Activated CD4-positive, alpha-beta memory T cell treated with anti-CD3 and anti-CD28 coated beads, Interleukin-2, amount 10 ng/mL, durations not matched to agents 7 days and 5 days (primary cell): ENCODE measurements at regions of chr19 and their contacts with region 1.

Region 1: DNA sequence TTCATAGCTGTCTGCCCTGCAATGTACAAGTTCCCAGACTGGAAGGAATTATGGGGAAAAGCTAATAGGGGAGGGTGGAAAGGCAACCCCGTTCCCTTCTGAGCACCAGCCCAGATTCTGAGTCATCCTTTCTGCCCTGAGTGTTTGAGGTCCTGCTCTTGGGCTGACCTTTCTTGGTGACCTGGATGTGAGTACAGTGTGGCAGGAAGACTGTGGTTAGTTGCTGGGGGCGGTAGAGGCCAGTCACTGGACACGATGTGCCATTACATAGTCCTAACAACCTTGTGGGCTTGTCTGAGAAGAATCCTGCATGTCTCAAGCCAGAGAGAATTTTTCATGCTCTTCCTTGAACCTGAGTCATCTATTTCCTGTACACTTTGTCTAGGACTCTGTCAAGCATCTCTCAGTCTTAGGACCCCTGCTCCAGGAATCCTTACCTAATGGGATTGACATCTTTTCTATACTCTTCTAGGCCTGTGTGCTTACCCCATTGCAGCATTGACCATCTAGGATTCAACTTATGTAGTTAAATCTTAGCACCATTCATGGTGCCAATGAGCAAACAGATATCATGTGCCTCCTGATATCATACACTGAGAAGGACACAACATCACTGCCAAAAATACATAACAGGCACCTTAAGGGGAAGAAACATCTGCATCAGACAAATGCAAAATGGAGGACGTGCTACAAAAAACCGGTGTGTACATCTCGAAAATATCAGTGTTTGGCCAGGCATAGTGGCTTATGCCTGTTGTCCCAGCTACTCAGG is 8.1 kb upstream of the ANGPTL4 start:
- DNase-seq: no peak
- H3K4me3 Mint-ChIP-seq: no peak overlapping the region
- H3K27ac Mint-ChIP-seq: no peak overlapping the region
- H3K4me1 Mint-ChIP-seq: peaks cover 13% of the 10 kb centered on the region
- H3K27me3 Mint-ChIP-seq: peaks cover 14% of the 10 kb centered on the region

Region 2: DNA sequence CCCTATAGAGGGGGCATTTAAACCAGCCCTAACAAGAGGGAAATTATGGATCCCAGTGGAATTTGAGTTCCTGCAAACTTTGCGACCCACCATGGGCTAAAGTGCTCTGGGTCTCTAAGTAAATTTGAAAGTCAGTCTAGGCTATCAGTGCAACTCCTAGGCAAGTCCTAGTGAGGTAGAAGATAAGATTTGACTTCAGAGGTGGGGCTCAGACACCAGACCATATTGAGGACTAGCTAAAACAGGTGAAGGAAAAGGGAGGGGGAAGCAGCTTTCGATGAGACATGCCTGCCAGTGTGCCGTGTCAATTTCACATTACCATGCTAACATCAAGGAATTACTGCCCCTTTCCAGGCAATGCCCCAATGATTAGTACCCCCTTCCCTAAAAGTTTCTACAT is 86.1 kb before region 1 on chr19:
- CTCF ChIA-PET with region 1: interaction called, 14 read pairs
- POLR2A ChIA-PET with region 1: interaction called, 3 read pairs
- DNase-seq: no peak
- H3K4me3 Mint-ChIP-seq: peak overlapping the region; percentile 87
- H3K27ac Mint-ChIP-seq: peak overlapping the region; percentile 81
- H3K4me1 Mint-ChIP-seq: peaks cover 19% of the 10 kb centered on the region
- H3K27me3 Mint-ChIP-seq: no peaks in the 10 kb centered on the region

Region 3: GRCh38 chr19:8342684-8343482 is 12.9 kb before region 1 on chr19 and contains the start of gene KANK3:
- CTCF ChIA-PET with region 1: interaction called, 28 read pairs
- POLR2A ChIA-PET with region 1: interaction called, 12 read pairs
- DNase-seq: peak; percentile 95
- H3K4me3 Mint-ChIP-seq: peak within 1 kb of the TSS; percentile 82
- H3K27ac Mint-ChIP-seq: peak within 1 kb of the TSS; percentile 64
- H3K4me1 Mint-ChIP-seq: peaks cover 21% of the 10 kb centered on the region
- H3K27me3 Mint-ChIP-seq: peaks cover 16% of the 10 kb centered on the region
- total RNA-seq, gene KANK3: 7.4 to 8.7 TPM

Region 4: DNA sequence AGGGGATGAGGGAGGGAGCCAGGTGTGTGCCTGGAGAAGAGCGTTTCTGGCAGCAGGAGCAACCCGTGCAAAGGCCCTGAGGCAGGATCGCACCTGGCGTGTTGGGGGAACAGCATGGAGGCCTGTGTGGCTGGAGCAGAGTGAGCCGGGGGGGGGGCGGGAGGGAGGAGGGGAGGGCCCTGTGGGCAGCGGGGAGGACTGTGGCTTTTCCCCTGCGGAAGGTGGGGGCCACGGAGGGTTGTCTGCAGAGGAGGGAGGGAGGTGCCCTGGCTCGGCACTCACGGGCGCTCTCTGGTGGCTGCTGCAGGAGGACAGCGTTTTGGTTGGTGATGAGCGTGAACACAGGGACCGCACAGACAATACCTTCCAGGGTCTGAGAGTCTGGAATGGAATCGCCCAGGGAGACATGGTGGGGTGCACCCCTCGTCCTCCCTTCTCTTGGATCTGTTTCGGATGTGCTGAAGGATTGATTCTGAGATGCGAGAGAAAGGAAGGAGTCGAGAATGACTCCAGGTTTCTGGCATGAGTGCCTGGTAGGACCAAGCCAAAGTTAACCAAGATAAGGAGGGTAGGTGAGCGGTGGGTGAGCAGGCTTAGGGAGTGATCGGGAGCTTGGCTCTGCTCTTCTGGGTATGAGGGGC is 40.9 kb after region 1 on chr19:
- CTCF ChIA-PET with region 1: interaction called, 16 read pairs
- POLR2A ChIA-PET with region 1: interaction called, 4 read pairs
- DNase-seq: peak; percentile 86
- H3K4me3 Mint-ChIP-seq: no peak overlapping the region
- H3K27ac Mint-ChIP-seq: no peak overlapping the region
- H3K4me1 Mint-ChIP-seq: peaks cover 29% of the 10 kb centered on the region
- H3K27me3 Mint-ChIP-seq: no peaks in the 10 kb centered on the region

Region 5: GRCh38 chr19:8505680-8506401 is 150.0 kb after region 1 on chr19:
- CTCF ChIA-PET with region 1: interaction called, 10 read pairs
- POLR2A ChIA-PET with region 1: no interaction called
- DNase-seq: peak; percentile 64
- H3K4me3 Mint-ChIP-seq: peak overlapping the region; percentile 77
- H3K27ac Mint-ChIP-seq: peak overlapping the region; percentile 61
- H3K4me1 Mint-ChIP-seq: peaks cover 22% of the 10 kb centered on the region
- H3K27me3 Mint-ChIP-seq: no peaks in the 10 kb centered on the region